Adrenal gland (tissue), 19 donors: ENCODE measurements at regions of chr11 and their contacts with region 1.

Region 1: GRCh38 chr11:47620836-47621378 is 21.5 kb downstream of the MTCH2 start:
- DNase-seq: no peak
- H3K4me3 ChIP-seq: no peak overlapping the region
- H3K27ac ChIP-seq: no peak overlapping the region
- H3K4me1 ChIP-seq: peaks cover 0 to 10% of the 10 kb centered on the region in 2 donors
- H3K27me3 ChIP-seq: no peaks in the 10 kb centered on the region
- CTCF ChIP-seq: no peak
- POLR2A ChIP-seq: no peak

Region 2: DNA sequence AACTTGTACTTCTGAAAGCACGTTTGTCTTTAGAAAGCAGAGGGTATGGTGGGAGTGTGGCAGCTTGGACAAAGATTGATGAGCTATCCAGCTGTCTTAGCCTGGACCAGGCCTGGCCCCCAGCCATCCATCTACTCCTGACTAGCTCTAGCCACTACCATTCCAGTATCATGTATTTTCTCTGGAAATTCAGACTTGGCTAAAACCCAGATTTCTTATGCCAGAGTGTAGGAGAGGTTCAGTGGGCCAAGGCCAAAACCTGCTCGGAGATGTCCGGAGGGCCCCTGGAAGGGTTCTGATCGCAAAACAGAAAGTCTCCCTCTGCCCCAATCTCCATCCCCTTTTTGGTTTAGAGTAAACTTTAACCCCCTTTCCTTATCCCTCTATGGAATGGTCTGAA is 46.2 kb after region 1 on chr11:
- intact Hi-C with region 1: no loop called
- DNase-seq: no peak
- H3K4me3 ChIP-seq: no peak overlapping the region
- H3K27ac ChIP-seq: no peak overlapping the region
- H3K4me1 ChIP-seq: no peaks in the 10 kb centered on the region
- H3K27me3 ChIP-seq: no peaks in the 10 kb centered on the region
- CTCF ChIP-seq: no peak
- POLR2A ChIP-seq: no peak

Region 3: GRCh38 chr11:47837292-47837691 is 216.4 kb after region 1 on chr11:
- intact Hi-C with region 1: loop called in 1 of 2 experiments (anchors 10 kb)
- DNase-seq: no peak
- H3K4me3 ChIP-seq: no peak overlapping the region
- H3K27ac ChIP-seq: no peak overlapping the region
- H3K4me1 ChIP-seq: no peaks in the 10 kb centered on the region
- H3K27me3 ChIP-seq: no peaks in the 10 kb centered on the region
- CTCF ChIP-seq: no peak
- POLR2A ChIP-seq: no peak